PC-3 (cell line): ENCODE measurements at regions of chrX and their contacts with region 1.

Region 1: GRCh38 chrX:45295259-45295986 is 94.7 kb upstream of the DIPK2B start:
- DNase-seq: peak; percentile 64
- ATAC-seq: peak; percentile 33
- H3K4me3 ChIP-seq: no peak overlapping the region
- H3K27ac ChIP-seq: no peak overlapping the region
- H3K4me1 ChIP-seq: peaks cover 11% of the 10 kb centered on the region
- H3K27me3 ChIP-seq: no peaks in the 10 kb centered on the region
- CTCF ChIP-seq: no peak

Region 2: DNA sequence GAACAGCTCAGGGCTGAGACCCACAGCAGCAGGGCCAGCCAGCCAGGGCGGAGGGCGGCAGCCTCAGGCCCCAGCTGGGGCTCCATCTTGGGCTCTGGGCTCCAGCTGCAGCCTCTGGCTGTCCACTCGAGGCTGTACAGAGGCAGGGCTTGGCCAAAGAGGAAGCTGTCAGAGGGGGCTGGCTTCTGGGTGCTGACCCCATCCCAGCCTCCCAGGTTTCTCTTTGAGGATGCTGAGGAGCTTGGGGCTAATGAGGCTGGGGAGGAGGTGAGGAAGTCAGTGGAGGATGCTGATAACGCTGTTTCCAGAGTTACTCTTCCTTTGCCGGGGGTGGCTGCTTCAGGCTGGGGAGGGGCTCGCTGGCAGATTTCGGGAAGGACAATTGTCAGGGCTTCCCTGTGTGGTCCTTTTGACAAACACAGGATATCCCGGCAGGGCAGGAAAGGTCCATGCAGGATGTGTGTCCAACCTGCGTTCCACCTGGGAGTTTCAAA is 94.6 kb before region 1 on chrX and contains the start of gene DIPK2B:
- CTCF ChIA-PET with region 1: no interaction called
- POLR2A ChIA-PET with region 1: no interaction called
- intact Hi-C with region 1: loop called (anchors 5 kb)
- DNase-seq: no peak
- ATAC-seq: no peak
- H3K4me3 ChIP-seq: no peak within 1 kb of the TSS
- H3K27ac ChIP-seq: peak within 1 kb of the TSS; percentile 63
- H3K4me1 ChIP-seq: peaks cover 29% of the 10 kb centered on the region
- H3K27me3 ChIP-seq: no peaks in the 10 kb centered on the region
- CTCF ChIP-seq: no peak
- total RNA-seq, gene DIPK2B: 0.18 and 0.40 TPM in 2 replicates